Gastrocnemius medialis (tissue), 4 donors: ENCODE measurements at regions of chr5 and their contacts with region 1.

Region 1: GRCh38 chr5:177497292-177498033 is at the start of gene PDLIM7:
- DNase-seq: peak; percentile 92 to 95
- ATAC-seq: peak; percentile 73 to 79
- H3K4me3 ChIP-seq: peak within 1 kb of the TSS; percentile 70 to 87 (median 82)
- H3K27ac ChIP-seq: peak within 1 kb of the TSS; percentile 96 to 99 (median 98)
- H3K4me1 ChIP-seq: peaks cover 57% of the 10 kb centered on the region in 2 donors
- H3K27me3 ChIP-seq: no peaks in the 10 kb centered on the region
- CTCF ChIP-seq: peak in 2 of 5 experiments; percentile 6 to 30
- POLR2A ChIP-seq: peak; percentile 98 to 99
- total RNA-seq, gene PDLIM7: 132 to 244 (median 220) TPM

Region 2: DNA sequence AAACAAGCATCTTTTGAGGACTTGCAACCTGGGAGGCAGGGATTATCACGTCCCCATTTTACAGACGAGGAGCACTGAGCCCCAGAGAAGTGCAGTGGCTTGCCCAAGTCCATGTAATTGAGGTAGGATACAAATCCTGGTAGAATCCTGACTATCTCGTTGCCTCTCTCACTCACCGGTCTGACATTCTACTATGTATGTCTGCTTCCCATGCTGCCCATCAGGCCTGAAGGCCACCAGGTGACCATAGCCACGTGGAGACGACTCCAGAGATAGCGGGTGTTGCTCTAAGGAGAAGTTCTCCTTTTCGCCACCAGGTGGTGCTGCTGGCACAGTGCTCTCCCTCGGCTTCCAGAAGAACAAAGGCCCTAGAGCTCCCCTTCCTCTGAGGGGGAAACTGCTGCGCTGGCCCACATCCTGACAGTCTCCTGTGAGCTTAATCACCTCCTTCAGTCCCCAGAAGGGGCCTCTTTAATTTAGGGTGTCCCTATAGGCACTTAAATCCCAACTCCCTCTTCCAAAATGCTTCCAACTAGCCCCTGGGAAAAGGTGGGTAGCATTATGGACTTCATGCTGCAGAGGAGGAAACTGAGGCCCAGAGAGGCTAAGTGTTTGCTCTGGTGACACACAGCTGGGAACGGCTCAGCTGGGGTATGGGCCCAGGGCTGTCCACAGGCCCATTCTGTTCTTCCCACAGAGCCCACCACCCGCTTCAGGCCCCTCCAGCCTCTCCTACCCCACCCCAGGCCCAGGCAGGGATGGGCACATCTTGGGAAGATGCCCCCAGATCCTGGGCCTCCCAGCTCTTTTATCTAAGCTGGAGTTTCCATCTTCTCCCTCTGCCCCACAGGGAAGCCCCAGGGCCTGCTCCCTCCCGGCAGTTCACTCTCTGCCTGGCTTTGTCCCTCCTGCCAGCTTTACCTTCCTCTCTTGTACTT is 106.8 kb before region 1 on chr5:
- in situ Hi-C with region 1: loop called in 3 of 4 experiments (anchors 5 to 25 kb)
- intact Hi-C with region 1: loop called (anchors 1 kb)
- DNase-seq: peak; percentile 51 to 73
- ATAC-seq: peak; percentile 84 to 95
- H3K4me3 ChIP-seq: no peak overlapping the region
- H3K27ac ChIP-seq: no peak overlapping the region
- H3K4me1 ChIP-seq: no peaks in the 10 kb centered on the region
- H3K27me3 ChIP-seq: no peaks in the 10 kb centered on the region
- CTCF ChIP-seq: peak; percentile 91 to 99 (median 95)
- POLR2A ChIP-seq: no peak

Region 3: DNA sequence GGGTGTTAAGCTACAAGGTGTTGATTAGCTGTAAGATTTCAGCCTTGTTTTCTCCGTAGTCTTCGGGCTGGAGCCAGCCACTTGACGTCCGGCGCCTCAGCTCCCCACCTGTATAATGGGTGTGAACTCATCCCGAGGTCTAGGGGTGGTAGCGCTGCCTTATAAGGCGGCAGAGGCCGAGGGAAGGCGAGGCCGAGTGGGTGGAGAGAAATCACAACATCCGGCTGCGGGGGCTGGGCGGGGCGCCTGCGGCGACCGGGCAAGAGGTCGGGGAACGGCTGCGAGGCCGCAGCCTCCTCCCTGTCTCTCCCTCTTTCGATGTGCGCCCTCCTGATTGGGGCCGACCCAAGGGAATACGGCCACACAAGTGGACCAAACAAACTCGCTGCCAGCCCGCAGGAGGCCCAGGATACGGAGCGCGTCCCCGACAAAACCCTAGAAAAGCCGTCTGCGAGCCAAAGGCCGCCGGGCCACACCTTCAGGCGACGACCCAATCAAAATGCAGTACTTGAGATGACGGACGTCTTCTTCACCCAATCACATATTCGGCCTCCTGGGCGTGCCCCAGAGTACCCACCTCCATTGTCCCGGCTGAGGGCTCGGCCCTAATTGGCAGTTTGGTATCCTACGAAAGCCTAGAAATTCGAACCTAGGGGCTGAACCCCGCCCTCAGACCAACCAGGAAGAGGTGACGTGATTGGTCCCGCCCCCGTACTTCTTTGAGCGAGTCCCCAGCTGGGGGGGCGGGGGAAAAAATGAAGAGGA is 71.5 kb before region 1 on chr5:
- in situ Hi-C with region 1: no loop called
- intact Hi-C with region 1: loop called (anchors 1 kb)
- DNase-seq: peak; percentile 100
- ATAC-seq: peak; percentile 96 to 97
- H3K4me3 ChIP-seq: peak overlapping the region; percentile 59 to 64 (median 63)
- H3K27ac ChIP-seq: peak overlapping the region; percentile 87 to 93 (median 89)
- H3K4me1 ChIP-seq: peaks cover 24 to 26% of the 10 kb centered on the region in 2 donors
- H3K27me3 ChIP-seq: no peaks in the 10 kb centered on the region
- CTCF ChIP-seq: no peak
- POLR2A ChIP-seq: peak; percentile 71 to 78

Region 4: DNA sequence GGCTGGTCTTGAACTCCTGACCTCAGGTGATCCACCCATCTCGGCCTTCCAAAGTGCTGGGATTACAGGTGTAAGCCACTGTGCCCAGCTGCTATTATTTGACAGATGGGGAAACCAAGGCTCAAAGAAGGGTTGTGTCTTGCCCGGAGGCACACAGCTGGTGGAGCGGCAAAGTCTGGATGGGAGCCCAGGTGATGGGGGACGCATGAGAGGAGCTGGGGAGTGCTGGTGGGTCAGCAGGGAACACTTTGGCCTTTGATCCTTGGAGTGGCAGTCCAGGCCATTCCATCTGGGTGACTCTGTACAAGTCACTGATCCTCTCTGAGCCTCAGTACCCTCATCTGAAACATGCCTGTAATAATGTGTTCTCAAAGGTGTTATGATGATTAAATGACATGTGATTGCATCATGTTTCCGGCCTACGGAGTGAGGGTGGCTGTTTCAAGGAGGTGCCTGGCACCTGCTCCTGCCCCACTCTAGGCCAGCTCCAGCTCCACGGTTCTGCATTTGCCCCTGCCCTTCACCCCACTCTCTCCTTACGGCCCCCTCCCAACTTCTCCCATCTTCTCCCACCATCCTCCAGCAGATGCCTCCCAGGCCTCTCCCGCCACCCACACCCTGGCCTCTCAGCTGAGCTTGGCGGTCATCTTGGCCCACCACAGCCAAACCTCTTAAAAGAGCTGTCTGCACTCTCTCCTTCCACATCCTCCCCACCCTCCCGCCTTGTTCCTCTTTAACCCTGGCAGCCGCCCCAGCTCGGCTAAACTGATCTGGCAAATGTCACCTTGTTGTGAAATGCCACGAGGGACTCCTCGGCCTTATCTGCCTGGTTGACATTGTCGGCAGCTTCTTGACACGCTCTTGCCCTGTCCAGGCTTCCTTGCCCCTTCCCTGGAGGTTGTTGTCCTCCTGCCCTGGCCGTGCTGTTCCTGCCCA is 18.5 kb before region 1 on chr5:
- in situ Hi-C with region 1: no loop called
- intact Hi-C with region 1: loop called (anchors 1 kb)
- DNase-seq: peak; percentile 83 to 92
- ATAC-seq: peak; percentile 82 to 88
- H3K4me3 ChIP-seq: no peak overlapping the region
- H3K27ac ChIP-seq: peak overlapping the region; percentile 81 to 96 (median 87)
- H3K4me1 ChIP-seq: peaks cover 26 to 50% of the 10 kb centered on the region in 2 donors
- H3K27me3 ChIP-seq: no peaks in the 10 kb centered on the region
- CTCF ChIP-seq: no peak
- POLR2A ChIP-seq: no peak

Region 5: DNA sequence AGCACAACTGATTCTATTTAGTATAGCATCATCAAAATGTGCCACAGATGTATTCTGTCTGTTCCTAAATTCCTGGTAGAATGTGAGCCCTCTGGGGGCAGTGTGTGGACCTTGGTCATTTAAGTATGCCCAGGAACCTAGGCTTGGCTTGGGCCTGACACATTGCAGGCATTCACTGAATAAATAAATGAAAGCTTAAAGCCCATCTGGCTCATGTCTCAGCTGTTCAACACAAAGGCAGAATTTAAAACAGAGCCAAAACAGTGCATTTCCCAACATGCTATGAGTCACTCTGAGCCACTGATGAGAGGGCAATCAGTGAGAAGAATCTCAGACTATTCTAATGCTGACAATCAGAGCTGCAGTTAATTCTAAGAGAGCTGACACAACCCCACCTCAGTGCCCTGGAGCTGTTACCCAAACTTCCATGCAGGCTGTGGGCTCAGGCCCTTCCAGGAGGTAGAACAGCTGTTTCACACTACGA is 48.8 kb after region 1 on chr5:
- in situ Hi-C with region 1: no loop called
- intact Hi-C with region 1: loop called (anchors 1 kb)
- DNase-seq: peak; percentile 52 to 81
- ATAC-seq: peak; percentile 68 to 77
- H3K4me3 ChIP-seq: peak overlapping the region in 2 of 4 donors; percentile 10 to 35
- H3K27ac ChIP-seq: peak overlapping the region; percentile 94 to 96 (median 95)
- H3K4me1 ChIP-seq: peaks cover 66 to 79% of the 10 kb centered on the region in 2 donors
- H3K27me3 ChIP-seq: no peaks in the 10 kb centered on the region
- CTCF ChIP-seq: no peak
- POLR2A ChIP-seq: peak in 1 of 2 donors; percentile 20

Region 6: DNA sequence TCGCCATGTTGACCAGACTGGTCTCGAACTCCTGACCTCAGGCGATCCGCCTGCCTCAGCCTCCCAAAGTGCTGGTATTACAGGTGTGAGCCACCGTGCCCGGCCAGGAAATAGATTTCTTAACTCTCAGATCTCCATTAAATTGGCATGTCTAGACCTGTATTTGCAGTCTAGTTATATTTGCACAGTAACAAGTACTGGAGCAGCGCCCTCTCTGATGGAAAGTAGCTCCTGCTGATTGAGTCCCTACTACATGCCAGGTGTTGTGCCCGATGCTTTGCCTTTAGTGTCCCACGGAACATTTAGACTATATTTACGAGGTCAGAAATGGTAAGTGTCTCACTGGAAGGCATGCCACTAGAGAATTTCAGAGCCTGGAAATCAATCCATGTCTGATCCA is 78.7 kb after region 1 on chr5:
- in situ Hi-C with region 1: no loop called
- intact Hi-C with region 1: no loop called
- DNase-seq: no peak
- ATAC-seq: no peak
- H3K4me3 ChIP-seq: no peak overlapping the region
- H3K27ac ChIP-seq: no peak overlapping the region
- H3K4me1 ChIP-seq: no peaks in the 10 kb centered on the region
- H3K27me3 ChIP-seq: no peaks in the 10 kb centered on the region
- CTCF ChIP-seq: no peak
- POLR2A ChIP-seq: no peak